AG04449 (cell line): ENCODE measurements at regions of chr3 and their contacts with region 1.

Region 1: DNA sequence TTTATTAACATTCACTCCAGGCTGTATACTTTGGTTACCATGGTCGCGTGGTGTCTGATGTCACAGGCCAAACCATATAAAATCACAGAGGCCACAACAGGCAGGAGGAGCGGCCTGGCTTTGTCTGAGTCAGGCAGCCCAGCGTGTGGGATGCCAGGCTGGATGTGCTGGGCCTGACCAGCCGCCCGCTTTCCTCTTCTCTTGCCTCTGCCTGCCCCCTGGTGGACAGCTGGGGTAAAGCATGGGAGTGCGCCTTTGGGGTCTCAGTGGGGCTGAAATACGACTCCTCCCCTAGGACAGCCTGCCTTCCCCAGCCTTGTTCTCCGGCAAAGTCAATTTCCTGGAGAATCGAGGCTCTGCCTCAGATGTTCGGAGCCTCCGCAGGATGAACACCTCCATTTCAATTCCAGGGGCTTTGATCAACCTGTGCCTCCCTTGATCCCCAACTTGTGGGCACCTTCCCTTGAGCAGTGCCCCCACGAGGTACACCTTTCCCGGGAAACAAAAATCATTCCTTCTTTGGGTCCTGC is 78.2 kb downstream of the CCNL1 start:
- DNase-seq: peak; percentile 60
- H3K4me3 ChIP-seq: no peak overlapping the region
- CTCF ChIP-seq: peak; percentile 96

Region 2: GRCh38 chr3:156535162-156535627 is 546.6 kb before region 1 on chr3:
- CTCF ChIA-PET with region 1: interaction called, 12 read pairs
- POLR2A ChIA-PET with region 1: interaction called, 3 read pairs
- DNase-seq: peak; percentile 97
- H3K4me3 ChIP-seq: no peak overlapping the region
- CTCF ChIP-seq: peak; percentile 29

Region 3: GRCh38 chr3:156547637-156548036 is 534.1 kb before region 1 on chr3:
- CTCF ChIA-PET with region 1: interaction called, 11 read pairs
- POLR2A ChIA-PET with region 1: no interaction called
- DNase-seq: no peak
- H3K4me3 ChIP-seq: no peak overlapping the region
- CTCF ChIP-seq: no peak

Region 4: DNA sequence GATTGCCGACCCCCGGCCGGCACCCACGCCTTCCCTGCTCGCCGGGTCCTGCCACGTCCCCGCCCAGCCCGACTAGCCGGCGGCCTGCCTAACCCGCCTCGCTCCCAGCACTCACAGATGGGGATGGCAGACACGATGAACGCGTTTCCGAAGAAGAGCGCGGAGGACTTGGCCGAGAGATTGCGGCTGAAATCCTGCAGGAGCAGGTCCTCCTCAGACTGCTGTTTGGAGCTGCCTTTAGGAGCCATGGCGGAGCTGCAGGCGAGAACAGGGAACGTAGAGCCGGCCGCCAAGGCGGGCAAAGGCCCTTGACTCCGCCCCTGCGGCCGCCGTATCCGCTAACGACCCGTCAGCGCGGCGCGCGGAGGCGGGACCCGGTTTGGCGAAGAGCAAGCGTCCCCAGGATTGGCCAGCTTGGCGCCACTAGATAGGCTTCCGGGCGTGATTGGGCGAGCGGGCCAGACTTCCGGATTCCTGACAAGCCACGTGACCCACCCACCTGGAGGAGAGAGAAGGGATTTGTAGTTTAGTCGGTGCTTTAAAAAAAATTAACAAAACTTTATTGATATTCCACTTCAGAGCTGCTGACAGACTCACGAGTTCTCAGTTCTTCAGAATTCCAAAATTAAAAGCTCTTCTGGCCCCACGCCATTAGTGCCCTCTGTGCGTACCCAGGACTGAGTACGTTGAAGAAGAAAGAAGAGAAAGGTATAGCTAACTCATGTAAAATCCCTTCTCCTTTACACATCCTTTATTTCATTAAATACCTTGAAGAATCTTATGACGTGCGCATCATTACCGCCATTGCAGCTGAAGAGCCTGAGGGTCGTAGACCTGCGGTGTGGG is 526.7 kb before region 1 on chr3 and contains the start of gene SSR3:
- CTCF ChIA-PET with region 1: interaction called, 7 read pairs
- POLR2A ChIA-PET with region 1: interaction called, 10 read pairs
- DNase-seq: peak; percentile 97
- H3K4me3 ChIP-seq: peak within 1 kb of the TSS; percentile 71
- CTCF ChIP-seq: no peak

Region 5: DNA sequence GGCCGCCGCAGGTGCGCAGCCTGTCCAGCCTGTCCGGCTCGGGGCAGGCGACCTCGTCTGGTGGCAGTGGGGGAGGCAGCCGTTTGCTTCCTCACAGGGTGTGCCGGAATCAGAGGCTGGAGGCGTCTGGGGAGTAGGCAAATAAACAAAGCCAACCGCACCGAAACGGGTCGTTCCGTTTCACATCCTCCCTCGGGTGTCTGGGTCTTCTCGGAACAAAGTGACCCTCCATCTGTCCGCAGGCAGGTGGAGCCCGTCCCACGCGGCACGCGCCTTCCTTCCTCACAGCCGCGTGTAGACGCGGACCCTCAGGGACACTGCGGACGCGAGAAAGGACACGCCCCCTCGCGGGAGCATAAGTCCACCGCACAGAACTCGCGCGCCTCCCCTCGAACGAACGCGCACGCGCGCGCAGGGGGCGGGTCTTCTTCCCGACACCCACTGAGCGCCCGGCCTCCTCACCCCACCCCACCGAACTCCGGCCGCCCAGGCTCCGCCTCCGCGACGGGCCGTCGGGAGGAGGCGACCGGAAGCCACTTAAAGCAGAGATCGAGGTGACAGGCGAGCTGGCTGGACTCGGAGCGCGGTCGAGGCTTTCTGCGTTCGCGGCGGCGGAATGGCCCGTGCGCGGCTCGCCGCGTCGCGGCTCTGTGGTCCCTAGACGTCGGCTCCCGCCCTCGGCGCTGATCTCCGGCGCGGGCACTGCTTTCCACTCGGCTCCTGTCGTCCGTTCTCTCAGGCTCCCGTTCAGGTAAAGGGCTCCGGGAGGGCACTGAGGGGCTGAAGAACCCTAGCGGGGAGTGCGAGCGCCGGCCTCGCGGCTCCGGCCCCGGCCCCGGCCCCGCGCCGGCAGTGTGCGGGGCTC is 407.5 kb before region 1 on chr3 and contains the start of gene TIPARP:
- CTCF ChIA-PET with region 1: interaction called, 59 read pairs
- POLR2A ChIA-PET with region 1: interaction called, 3 read pairs
- DNase-seq: peak; percentile 77
- H3K4me3 ChIP-seq: peak within 1 kb of the TSS; percentile 78
- CTCF ChIP-seq: peak; percentile 73

Region 6: DNA sequence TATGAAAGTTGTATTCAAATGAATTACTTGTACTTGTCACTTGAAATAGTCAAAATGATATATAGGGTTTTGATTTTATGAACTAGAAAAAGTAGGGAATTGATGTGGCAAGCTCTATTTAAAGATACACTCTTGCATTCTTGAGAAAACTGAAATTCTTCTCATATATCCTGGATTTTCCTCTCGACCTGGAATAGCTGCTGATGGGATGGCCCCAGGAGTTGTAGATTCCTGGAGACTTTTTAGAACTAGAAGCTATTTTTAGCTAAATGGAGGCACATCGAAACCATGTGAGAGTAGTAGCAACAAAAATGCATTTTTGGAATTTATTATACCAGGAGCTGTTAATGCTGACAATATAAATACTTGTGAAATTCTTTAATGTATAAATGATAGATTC is 129.7 kb before region 1 on chr3:
- CTCF ChIA-PET with region 1: no interaction called
- POLR2A ChIA-PET with region 1: no interaction called
- DNase-seq: peak; percentile 12
- H3K4me3 ChIP-seq: no peak overlapping the region
- CTCF ChIP-seq: no peak

Region 7: DNA sequence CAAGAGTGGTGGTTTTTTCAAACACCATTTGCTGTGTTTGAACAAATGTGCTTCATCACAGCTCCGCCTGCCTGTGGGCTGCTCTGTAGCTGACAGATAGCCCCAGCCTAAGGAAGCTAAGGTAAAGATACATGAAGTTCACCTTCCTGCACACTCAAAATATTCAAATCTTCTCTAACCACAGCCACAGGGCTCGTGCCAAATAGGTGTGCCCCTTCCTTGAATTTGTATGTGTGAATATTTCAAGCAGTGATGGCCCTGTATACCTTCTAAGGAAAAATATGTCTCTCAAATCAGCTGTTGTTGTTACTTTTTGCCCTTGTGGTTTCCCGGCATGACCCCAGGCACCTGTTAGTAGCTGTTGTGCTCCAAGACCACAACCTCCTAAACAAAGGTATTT is 14.6 kb before region 1 on chr3:
- CTCF ChIA-PET with region 1: interaction called, 39 read pairs
- POLR2A ChIA-PET with region 1: interaction called, 3 read pairs
- DNase-seq: no peak
- H3K4me3 ChIP-seq: no peak overlapping the region
- CTCF ChIP-seq: no peak

Region 8: DNA sequence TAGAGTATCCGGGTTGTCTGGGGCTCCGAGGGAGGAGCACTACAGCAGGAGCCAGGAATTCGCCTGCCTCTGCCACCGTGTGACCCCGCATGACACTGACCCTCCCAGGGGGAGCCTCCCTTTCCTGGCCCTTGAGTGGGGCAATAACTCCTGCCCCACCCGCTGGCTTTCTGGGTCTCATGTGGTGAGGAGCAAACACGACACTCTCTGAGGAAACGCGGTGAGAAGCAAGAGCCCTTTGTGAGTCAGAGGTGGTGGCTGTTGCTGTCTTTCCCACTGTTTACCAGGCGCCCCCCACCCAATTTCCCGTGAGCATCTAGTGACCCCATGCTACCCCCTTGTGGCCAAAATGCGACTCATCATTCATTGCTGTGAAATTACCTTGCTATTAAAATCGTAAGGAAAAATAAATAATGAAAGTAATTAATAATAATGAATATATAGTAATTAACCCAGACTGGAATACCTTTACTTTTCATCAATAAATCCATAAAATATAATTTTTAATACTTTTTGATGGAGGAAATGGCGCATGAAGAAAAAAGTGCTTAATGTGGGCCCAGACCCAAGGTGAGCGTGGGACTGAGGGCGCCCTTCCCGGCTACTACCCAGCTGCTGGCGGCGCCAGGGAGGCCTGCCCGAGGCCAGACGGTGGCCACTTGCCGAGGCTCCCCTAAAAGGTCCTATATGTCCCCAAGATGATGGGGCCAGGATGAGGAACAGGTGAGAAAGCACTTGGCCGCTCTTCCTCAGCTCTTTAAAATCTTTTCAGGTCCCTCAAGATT is 48.9 kb after region 1 on chr3:
- CTCF ChIA-PET with region 1: interaction called, 90 read pairs
- POLR2A ChIA-PET with region 1: no interaction called
- DNase-seq: no peak
- H3K4me3 ChIP-seq: no peak overlapping the region
- CTCF ChIP-seq: peak; percentile 53

Region 9: DNA sequence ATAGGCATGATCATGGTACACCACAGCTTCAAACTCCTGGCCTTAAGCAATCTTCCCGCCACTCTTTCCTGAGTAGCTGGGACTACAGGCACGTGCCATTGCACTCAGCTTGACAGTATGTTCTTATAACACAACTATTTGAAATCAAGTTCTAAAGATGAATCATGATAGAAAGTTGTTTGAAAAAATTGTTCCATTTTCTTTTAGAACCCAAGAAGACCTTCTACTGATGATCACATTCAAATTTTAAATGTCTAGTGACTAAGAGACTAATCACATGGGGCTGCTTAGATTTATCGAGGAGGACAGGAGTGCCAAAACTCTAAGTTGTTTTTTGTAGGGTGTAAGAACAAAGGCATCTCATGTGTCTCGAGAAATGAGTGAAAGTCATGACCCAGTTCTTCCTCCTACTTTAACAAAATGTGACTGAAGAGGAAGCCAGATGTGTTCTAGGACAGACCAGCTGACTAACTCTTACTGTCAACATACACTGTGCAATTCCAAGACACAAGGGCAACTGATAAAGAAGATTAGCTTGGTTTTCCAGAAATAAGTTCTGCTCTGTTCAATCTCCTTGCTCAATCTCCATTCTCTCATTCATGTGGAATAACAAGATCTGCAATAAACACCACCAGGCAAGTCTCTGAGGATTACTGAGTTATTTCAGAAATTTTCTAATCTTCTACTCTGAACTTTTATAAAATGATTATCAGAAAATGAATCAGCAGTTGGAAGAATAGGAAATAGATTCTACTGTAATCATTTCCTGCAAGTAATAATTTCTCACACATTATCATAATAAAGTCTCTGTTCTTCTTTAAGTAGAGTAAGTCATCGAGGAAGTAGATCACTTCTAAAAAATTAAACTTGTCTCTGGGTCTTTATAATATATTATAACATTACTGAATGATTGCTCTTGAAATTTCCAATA is 200.8 kb after region 1 on chr3:
- CTCF ChIA-PET with region 1: no interaction called
- POLR2A ChIA-PET with region 1: no interaction called
- DNase-seq: peak; percentile 90
- H3K4me3 ChIP-seq: no peak overlapping the region
- CTCF ChIP-seq: no peak

Region 10: DNA sequence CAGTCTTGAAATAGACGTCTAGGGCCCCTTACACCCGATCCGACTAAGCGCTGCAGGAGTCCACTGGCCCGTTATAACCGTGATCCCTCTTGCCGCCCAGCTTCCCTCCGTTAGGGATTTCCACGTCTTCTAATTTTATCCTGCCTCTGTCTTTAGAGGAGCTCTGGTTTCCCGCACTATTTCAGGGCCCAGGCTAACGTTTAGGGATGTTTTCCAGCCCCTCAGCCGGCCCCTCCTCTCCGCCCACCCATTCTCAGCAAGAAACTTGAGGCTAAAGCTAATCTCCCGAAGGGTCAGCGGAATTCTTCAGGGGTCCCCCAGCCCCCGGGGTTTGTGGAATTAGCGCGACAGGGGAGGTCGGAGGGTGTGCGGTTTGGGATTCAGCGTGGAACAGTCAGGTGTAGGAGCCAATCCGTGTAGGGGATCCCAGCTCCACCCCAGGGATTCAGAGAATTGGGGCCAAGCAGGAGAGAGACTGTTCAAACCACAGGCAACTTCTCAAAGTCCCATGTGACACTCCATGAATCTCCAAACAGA is 356.5 kb after region 1 on chr3:
- CTCF ChIA-PET with region 1: no interaction called
- POLR2A ChIA-PET with region 1: no interaction called
- DNase-seq: no peak
- H3K4me3 ChIP-seq: peak overlapping the region; percentile 70
- CTCF ChIP-seq: no peak

Region 11: GRCh38 chr3:157493627-157494550 is 412.1 kb after region 1 on chr3:
- CTCF ChIA-PET with region 1: no interaction called
- POLR2A ChIA-PET with region 1: no interaction called
- DNase-seq: no peak
- H3K4me3 ChIP-seq: no peak overlapping the region
- CTCF ChIP-seq: peak; percentile 45